HepG2 (cell line): ENCODE measurements at regions of chr17 and their contacts with region 1.

Region 1: GRCh38 chr17:8057691-8058114 is 18.8 kb downstream of the ALOX15B start:
- DNase-seq: peak; percentile 75
- ATAC-seq: peak; percentile 46
- H3K4me3 ChIP-seq: peak overlapping the region; percentile 38 to 64 (median 51); a peak in 5 of 6 replicates
- H3K27ac ChIP-seq: peak overlapping the region; percentile 92
- H3K4me1 ChIP-seq: peaks cover 56% of the 10 kb centered on the region
- H3K27me3 ChIP-seq: peaks cover 3 to 32% of the 10 kb centered on the region in 2 experiments; a peak in 4 of 5 replicates
- CTCF ChIP-seq: peak; percentile 82
- EP300 ChIP-seq: no peak
- POLR2A ChIP-seq: peak in 1 of 2 experiments; percentile 52; a peak in 2 of 4 replicates
- RAD21 ChIP-seq: peak; percentile 61; the same call in 1 of the 2 replicates

Region 2: GRCh38 chr17:7650509-7651096 is 407.1 kb before region 1 on chr17 and contains the start of gene ATP1B2:
- CTCF ChIA-PET with region 1: no interaction called
- POLR2A ChIA-PET with region 1: no interaction called
- in situ Hi-C with region 1: no loop called
- intact Hi-C with region 1: no loop called
- DNase-seq: peak; percentile 67
- ATAC-seq: peak; percentile 82
- H3K4me3 ChIP-seq: peak within 1 kb of the TSS; percentile 40 to 66 (median 43); a peak in 5 of 6 replicates
- H3K27ac ChIP-seq: no peak within 1 kb of the TSS
- H3K4me1 ChIP-seq: peaks cover 20% of the 10 kb centered on the region
- H3K27me3 ChIP-seq: peaks cover 6 to 55% of the 10 kb centered on the region in 2 experiments
- CTCF ChIP-seq: no peak
- EP300 ChIP-seq: no peak
- POLR2A ChIP-seq: no peak
- RAD21 ChIP-seq: no peak
- total RNA-seq, gene ATP1B2: not detected in 2 replicates

Region 3: DNA sequence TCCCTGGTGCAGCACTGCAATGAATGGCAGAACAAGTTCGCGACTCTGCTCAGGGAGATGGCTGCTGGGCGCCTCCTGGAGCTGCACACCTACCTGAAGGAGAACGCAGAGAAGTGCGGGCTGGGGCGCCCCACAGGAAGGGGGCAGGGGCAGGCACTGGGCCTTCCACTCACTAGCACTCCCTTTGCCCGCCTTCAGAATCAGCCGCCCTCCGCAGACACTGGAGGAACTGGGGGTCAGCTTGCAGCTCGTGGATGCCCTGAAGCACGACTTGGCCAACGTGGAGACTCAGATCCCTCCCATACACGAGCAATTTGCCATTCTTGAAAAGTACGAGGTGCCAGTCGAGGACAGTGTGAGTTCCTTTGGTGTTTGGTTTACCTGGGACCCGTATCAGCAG is 293.8 kb before region 1 on chr17:
- CTCF ChIA-PET with region 1: no interaction called
- POLR2A ChIA-PET with region 1: no interaction called
- in situ Hi-C with region 1: no loop called
- intact Hi-C with region 1: no loop called
- DNase-seq: no peak
- ATAC-seq: no peak
- H3K4me3 ChIP-seq: no peak overlapping the region
- H3K27ac ChIP-seq: no peak overlapping the region
- H3K4me1 ChIP-seq: no peaks in the 10 kb centered on the region
- H3K27me3 ChIP-seq: peaks cover 4 to 38% of the 10 kb centered on the region in 2 experiments
- CTCF ChIP-seq: no peak
- EP300 ChIP-seq: no peak
- POLR2A ChIP-seq: no peak
- RAD21 ChIP-seq: no peak

Region 4: DNA sequence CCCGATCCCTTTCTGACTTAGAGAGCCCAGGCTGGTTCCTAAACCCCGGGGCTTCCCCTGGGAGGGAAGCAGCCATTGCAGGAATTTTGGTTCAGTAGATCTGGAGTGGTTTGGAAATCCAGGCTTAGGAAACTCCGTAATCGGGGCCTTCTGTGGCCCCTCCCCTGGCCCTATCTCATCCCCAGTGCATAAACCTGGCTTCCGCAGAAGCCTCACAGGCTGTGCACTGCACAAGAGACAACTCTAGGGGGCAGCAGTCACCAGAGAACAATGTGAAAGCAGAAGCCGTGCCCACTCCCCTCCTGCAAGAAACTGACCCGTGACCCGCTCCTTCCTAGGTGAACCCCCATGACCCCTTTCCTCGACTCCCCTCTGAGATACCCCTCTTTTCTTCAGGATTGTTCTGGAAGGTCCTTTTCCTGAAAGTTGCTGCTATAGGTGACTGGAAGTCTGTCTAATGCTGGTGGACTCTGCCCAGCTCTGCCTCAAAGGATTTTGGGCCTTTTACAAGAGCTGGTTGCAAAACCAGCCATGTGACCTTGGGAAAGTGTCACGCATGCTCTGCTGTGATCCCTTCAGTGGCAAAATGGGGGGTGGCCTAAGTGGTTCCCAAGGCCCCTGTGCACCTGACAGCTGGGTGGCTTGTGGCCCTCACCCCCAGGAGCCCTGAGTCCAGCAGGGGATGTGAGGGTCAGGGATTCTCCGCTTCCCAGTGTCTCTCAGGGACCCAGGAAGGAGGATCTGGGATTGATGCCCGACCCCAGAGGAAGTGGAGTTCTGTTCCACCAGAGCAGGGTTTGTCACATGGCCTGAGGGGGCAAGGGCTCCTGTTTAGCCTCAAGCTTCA is 40.8 kb before region 1 on chr17:
- CTCF ChIA-PET with region 1: interaction called, 4 read pairs
- POLR2A ChIA-PET with region 1: interaction called, 4 read pairs
- in situ Hi-C with region 1: no loop called
- intact Hi-C with region 1: loop called (anchors 2 kb)
- DNase-seq: no peak
- ATAC-seq: peak; percentile 70
- H3K4me3 ChIP-seq: peak overlapping the region in 1 of 3 experiments; percentile 25; a peak in 2 of 6 replicates
- H3K27ac ChIP-seq: no peak overlapping the region
- H3K4me1 ChIP-seq: peaks cover 29% of the 10 kb centered on the region
- H3K27me3 ChIP-seq: peaks cover 1 to 62% of the 10 kb centered on the region in 2 experiments
- CTCF ChIP-seq: peak; percentile 74
- EP300 ChIP-seq: no peak
- POLR2A ChIP-seq: no peak
- RAD21 ChIP-seq: peak; percentile 54; the same call in 1 of the 2 replicates

Region 5: GRCh38 chr17:8109661-8110464 is 52.2 kb after region 1 on chr17:
- CTCF ChIA-PET with region 1: interaction called, 14 read pairs
- POLR2A ChIA-PET with region 1: no interaction called
- in situ Hi-C with region 1: no loop called
- intact Hi-C with region 1: loop called (anchors 5 kb)
- DNase-seq: no peak
- ATAC-seq: peak; percentile 89
- H3K4me3 ChIP-seq: peak overlapping the region in 1 of 3 experiments; percentile 23; a peak in 1 of 6 replicates
- H3K27ac ChIP-seq: no peak overlapping the region
- H3K4me1 ChIP-seq: no peaks in the 10 kb centered on the region
- H3K27me3 ChIP-seq: peaks cover 9 to 62% of the 10 kb centered on the region in 2 experiments
- CTCF ChIP-seq: peak; percentile 90
- EP300 ChIP-seq: no peak
- POLR2A ChIP-seq: no peak
- RAD21 ChIP-seq: peak; percentile 61